Activated naive CD8-positive, alpha-beta T cell treated with anti-CD3 and anti-CD28 coated beads, Interleukin-2, amount 10 ng/mL, durations not matched to agents 7 days and 5 days (primary cell): ENCODE measurements at regions of chr11 and their contacts with region 1.

Region 1: GRCh38 chr11:77994412-77995362 is at the start of gene INTS4:
- DNase-seq: peak; percentile 94
- ATAC-seq: peak; percentile 99
- H3K4me3 Mint-ChIP-seq: peak within 1 kb of the TSS; percentile 95
- H3K27ac Mint-ChIP-seq: peak within 1 kb of the TSS; percentile 91
- H3K4me1 Mint-ChIP-seq: peaks cover 12% of the 10 kb centered on the region
- H3K27me3 Mint-ChIP-seq: no peaks in the 10 kb centered on the region
- total RNA-seq, gene INTS4: 53.9 to 56.8 TPM

Region 2: GRCh38 chr11:77442394-77443053 is 552.2 kb before region 1 on chr11:
- POLR2A ChIA-PET with region 1: no interaction called
- DNase-seq: no peak
- ATAC-seq: peak; percentile 20
- H3K4me3 Mint-ChIP-seq: no peak overlapping the region
- H3K27ac Mint-ChIP-seq: no peak overlapping the region
- H3K4me1 Mint-ChIP-seq: peaks cover 39% of the 10 kb centered on the region
- H3K27me3 Mint-ChIP-seq: peaks cover 4% of the 10 kb centered on the region

Region 3: GRCh38 chr11:77820563-77821348 is 173.9 kb before region 1 on chr11 and contains the starts of genes AAMDC and RSF1:
- POLR2A ChIA-PET with region 1: interaction called, 20 read pairs
- DNase-seq: peak; percentile 93
- ATAC-seq: peak; percentile 89
- H3K4me3 Mint-ChIP-seq: peak within 1 kb of the TSS; percentile 96
- H3K27ac Mint-ChIP-seq: peak within 1 kb of the TSS; percentile 95
- H3K4me1 Mint-ChIP-seq: peaks cover 28% of the 10 kb centered on the region
- H3K27me3 Mint-ChIP-seq: no peaks in the 10 kb centered on the region
- total RNA-seq, gene AAMDC: 9.5 to 11.3 TPM
- total RNA-seq, gene RSF1: 64.8 to 74.1 TPM

Region 4: GRCh38 chr11:77865805-77866204 is 128.9 kb before region 1 on chr11:
- POLR2A ChIA-PET with region 1: no interaction called
- DNase-seq: no peak
- ATAC-seq: no peak
- H3K4me3 Mint-ChIP-seq: no peak overlapping the region
- H3K27ac Mint-ChIP-seq: no peak overlapping the region
- H3K4me1 Mint-ChIP-seq: no peaks in the 10 kb centered on the region
- H3K27me3 Mint-ChIP-seq: no peaks in the 10 kb centered on the region